ENCODE measurements at regions of chr15 and their contacts with region 1.

Region 1: DNA sequence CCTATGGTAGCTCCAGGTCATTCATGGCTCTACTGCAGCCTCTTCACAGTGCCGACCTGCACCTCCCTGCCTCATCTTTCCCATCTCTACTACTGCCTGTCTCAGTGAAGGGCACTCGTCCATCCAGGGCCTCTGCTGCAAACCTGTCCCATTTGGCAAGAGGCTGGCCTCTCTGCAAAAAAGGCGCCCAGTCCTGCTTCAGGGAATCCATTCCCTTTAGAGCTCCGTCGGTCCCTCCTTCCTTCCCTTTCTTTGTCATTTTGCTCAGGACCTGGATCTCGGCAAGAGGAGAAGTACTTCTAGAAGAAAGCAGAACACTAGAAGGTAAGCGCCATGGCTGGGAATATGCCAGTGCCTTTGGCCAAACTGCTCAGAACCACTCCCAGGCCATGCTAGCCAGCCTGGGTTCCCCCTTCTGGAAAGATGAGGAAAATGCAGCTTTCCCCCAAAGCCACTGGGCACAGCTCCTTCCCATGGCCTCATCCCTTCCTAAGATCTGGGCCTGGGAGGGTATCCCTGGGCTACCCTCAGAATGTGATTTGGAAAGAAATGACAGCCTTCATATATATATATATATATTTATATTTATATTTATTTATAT is 6.4 kb upstream of the ISL2 start:
- DNase-seq: peak; percentile 67
- ATAC-seq: peak; percentile 69

Region 2: DNA sequence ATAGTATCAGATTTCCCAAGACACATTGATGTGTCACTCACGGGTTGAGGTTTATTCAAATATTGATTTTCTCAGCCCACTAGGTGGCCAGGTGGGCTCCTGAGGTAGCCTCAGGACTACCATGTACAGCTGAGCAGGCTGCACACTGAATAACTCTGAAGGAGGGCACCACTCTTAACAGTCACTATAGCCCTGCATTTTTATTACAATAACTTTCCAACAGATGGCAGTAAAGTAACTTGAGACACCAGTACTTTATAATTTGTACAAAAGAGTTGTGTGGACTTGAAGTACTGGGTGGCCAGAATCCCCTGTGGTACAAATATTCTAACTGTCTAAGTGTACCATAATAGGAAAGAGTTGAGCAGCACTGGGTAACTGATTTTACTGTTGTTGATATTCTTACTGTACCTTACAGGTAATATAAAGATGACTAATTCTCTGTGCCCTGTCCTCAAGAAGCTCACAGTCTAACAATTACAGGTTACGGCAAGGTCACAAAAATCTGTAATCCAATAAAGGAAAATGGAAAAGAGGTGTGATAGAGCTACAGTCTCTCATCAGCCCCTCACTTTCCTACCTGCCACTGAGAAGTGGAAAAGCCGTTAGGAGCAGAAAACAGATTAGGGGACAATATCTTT is 94.9 kb before region 1 on chr15:
- intact Hi-C with region 1: loop called (anchors 5 kb)
- DNase-seq: no peak
- ATAC-seq: peak; percentile 79

Region 3: GRCh38 chr15:76815401-76815800 is 485.2 kb after region 1 on chr15:
- intact Hi-C with region 1: no loop called
- DNase-seq: no peak
- ATAC-seq: no peak